WTC11 (cell line): ENCODE measurements at regions of chr16 and their contacts with region 1.

Region 1: GRCh38 chr16:84511180-84511824 is 6.8 kb upstream of the MEAK7 start:
- DNase-seq: peak; percentile 83
- ATAC-seq: peak; percentile 72
- H3K4me3 Mint-ChIP-seq: peak overlapping the region; percentile 37
- H3K27ac Mint-ChIP-seq: no peak overlapping the region
- H3K4me1 Mint-ChIP-seq: peaks cover 35% of the 10 kb centered on the region
- H3K27me3 Mint-ChIP-seq: no peaks in the 10 kb centered on the region
- CTCF ChIP-seq: peak; percentile 91

Region 2: DNA sequence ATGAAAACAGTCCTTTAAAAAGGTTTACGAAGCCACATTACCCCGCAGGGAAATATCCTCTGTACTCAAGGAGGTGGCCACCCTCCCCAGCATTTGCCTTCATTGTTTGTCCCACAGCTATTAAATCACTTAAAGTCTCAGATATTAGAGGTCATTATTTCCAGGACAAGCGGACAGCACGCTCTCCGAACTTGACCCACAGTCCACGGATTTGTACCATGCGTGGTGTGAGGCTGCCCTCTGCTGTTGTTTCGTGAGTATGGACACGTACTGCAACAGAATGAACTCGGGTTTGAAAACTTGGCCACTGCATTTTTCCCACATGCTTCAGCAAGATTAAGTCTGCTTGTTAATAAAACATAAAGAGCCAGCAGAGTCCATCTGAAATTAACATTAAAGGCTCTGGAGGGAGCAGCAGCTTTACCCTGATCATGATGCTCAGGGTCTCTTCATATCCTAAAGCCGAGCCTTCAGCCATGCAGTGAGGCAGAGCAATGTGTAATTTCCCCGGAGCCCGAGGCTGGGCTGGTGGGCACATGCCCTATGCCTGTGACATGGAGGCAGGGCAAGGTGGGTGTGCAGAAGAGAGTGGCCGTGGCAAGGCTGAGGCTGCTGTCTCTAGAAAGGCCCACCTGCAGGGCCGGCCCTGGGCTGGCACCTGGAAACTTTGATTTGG is 26.6 kb before region 1 on chr16:
- CTCF ChIA-PET with region 1: no interaction called
- POLR2A ChIA-PET with region 1: no interaction called
- DNase-seq: peak; percentile 73
- ATAC-seq: peak; percentile 65
- H3K4me3 Mint-ChIP-seq: no peak overlapping the region
- H3K27ac Mint-ChIP-seq: no peak overlapping the region; the same call in 1 of the 2 replicates
- H3K4me1 Mint-ChIP-seq: no peaks in the 10 kb centered on the region
- H3K27me3 Mint-ChIP-seq: no peaks in the 10 kb centered on the region
- CTCF ChIP-seq: peak; percentile 57

Region 3: DNA sequence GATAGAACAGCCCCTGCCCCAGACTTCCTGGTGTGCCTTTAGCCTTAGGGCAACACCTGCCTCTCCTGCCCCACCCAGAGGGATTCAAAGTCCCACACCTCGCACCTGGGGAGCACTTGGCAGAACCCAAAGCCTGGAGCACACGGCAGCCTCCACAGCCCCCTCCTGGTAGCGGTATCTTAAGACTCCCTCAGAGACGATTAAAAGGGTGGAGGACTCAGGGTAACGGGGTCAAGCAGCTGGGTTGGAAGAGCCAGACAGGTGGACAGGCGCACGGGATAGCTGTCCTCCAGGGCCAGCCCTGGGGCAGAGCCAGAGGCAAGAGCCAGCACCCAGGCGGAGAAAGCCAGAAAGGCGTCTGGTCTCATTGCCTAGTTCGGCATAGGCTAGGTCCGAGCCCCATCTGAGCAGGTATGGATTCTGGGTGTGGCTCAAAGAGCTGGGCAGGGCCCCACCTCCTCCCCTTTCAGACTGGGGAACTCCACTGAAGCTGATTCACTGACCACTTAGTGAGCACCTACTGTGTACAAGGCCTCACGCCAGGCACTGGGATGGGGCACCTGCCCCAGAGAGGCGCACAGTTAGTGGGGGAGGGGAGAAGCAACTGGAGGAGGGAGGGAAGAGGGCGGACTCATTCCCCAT is 48.1 kb after region 1 on chr16:
- CTCF ChIA-PET with region 1: interaction called, 14 read pairs
- POLR2A ChIA-PET with region 1: interaction called, 3 read pairs
- DNase-seq: no peak
- ATAC-seq: peak; percentile 20
- H3K4me3 Mint-ChIP-seq: no peak overlapping the region
- H3K27ac Mint-ChIP-seq: no peak overlapping the region
- H3K4me1 Mint-ChIP-seq: peaks cover 65% of the 10 kb centered on the region
- H3K27me3 Mint-ChIP-seq: no peaks in the 10 kb centered on the region
- CTCF ChIP-seq: no peak

Region 4: DNA sequence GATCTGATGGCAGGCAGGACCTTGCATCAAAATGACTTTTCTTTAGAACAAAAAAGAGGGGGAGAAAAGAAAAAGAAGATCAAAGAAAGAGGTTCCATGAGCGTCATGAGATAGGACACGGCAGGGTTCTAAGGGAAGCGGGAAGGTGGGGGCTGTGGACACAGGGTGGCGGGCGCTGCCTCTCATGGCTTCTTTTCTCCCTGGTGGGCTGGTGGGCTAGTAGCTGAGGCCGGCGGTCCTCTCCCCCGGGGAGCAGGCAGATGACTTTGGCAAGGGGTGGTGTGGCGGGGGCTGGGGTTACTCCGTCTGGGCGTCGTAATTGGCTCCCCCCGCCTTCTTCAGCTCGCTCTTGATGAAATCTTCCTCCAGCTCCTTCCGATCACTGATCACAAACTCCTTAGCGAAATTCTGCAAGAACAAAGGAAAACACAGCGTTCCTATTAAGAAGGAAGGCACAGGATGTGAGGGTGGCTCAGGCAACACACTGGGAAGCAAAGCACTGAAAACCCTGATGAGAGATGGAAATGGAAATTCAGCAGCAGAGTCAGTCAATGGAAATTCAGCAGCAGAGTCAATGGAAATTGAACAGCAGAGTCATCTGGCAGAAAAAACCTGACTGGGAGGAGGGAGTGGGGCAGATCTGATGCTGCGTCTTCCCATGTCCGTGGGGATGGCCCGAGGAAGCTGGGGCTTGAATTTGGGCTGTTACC is 55.4 kb after region 1 on chr16:
- CTCF ChIA-PET with region 1: interaction called, 8 read pairs
- POLR2A ChIA-PET with region 1: interaction called, 10 read pairs
- DNase-seq: no peak
- ATAC-seq: peak; percentile 31
- H3K4me3 Mint-ChIP-seq: 0 out of 2 replicates have a peak overlapping the region, but pooled peaks have one; percentile 18
- H3K27ac Mint-ChIP-seq: peak overlapping the region; percentile 84
- H3K4me1 Mint-ChIP-seq: peaks cover 39% of the 10 kb centered on the region
- H3K27me3 Mint-ChIP-seq: no peaks in the 10 kb centered on the region
- CTCF ChIP-seq: no peak

Region 5: GRCh38 chr16:84599521-84600202 is 88.4 kb after region 1 on chr16:
- CTCF ChIA-PET with region 1: interaction called, 17 read pairs
- POLR2A ChIA-PET with region 1: no interaction called
- DNase-seq: peak; percentile 74
- ATAC-seq: peak; percentile 74
- H3K4me3 Mint-ChIP-seq: peak overlapping the region; percentile 41
- H3K27ac Mint-ChIP-seq: peak overlapping the region; percentile 29
- H3K4me1 Mint-ChIP-seq: peaks cover 63% of the 10 kb centered on the region
- H3K27me3 Mint-ChIP-seq: no peaks in the 10 kb centered on the region; the same call in 1 of the 2 replicates
- CTCF ChIP-seq: no peak

Region 6: DNA sequence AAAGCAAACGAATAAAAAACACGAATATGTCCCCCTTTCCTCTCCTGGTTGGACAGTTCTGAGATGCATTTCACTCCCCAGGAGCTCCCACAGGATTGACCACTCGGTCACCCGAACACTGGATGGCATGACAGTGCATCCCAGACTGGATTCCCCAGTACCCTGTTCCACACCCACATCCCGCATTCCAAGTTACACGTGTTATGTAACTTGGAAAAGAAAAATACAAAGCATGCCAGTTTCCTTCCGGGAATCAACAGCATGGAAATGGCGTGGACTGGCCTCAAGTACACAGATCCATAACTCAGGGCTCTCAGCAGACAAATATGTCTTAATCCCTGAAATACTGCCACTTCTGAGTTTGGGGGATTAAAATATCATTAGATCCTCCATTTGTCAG is 124.4 kb after region 1 on chr16:
- CTCF ChIA-PET with region 1: no interaction called
- POLR2A ChIA-PET with region 1: no interaction called
- DNase-seq: no peak
- ATAC-seq: no peak
- H3K4me3 Mint-ChIP-seq: no peak overlapping the region
- H3K27ac Mint-ChIP-seq: no peak overlapping the region
- H3K4me1 Mint-ChIP-seq: peaks cover 9% of the 10 kb centered on the region
- H3K27me3 Mint-ChIP-seq: no peaks in the 10 kb centered on the region
- CTCF ChIP-seq: no peak